Breast epithelium (tissue), 4 donors: ENCODE measurements at regions of chr6 and their contacts with region 1.

Region 1: DNA sequence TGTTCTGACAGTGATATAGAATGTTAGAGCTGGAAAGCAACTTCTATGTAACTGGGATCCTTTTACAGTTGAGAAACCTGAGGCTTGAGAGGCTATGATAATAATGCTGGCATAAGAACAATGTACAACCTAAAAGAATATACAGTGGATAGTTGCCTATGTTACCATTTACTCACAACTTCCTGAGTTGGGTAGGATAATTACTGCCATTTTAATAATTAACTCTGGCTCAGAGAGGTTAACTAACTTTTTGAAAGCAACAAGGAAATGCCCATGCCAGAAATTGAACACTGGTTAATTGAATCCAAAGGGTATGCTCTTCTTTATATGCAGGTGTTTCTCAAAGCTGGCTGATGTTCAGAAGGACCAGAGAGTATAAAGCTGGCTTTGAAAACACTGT is 530.7 kb upstream of the MAP3K7 start:
- DNase-seq: no peak
- H3K4me3 ChIP-seq: no peak overlapping the region
- H3K27ac ChIP-seq: no peak overlapping the region
- H3K4me1 ChIP-seq: no peaks in the 10 kb centered on the region
- H3K27me3 ChIP-seq: no peaks in the 10 kb centered on the region
- CTCF ChIP-seq: no peak
- POLR2A ChIP-seq: no peak

Region 2: DNA sequence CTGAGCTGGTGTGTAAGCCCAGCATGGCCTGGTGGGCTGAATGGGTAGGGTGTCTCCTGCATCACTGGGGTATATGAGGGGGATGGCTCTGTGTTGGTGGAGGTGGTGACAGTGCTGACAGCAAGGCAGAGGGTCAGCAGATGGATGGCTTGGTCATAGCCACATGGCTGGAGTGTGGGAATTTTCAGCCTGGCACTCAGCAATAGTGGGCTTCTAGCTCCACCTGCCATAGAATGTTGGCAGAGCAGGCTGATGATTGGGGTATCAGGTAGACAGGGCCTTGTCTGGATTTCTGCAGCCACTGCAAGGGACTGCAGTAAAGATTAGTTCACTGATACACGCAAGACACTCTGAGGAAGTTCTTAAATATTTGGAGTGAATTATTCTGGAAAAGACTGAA is 683.5 kb before region 1 on chr6:
- intact Hi-C with region 1: no loop called
- DNase-seq: no peak
- H3K4me3 ChIP-seq: no peak overlapping the region
- H3K27ac ChIP-seq: no peak overlapping the region
- H3K4me1 ChIP-seq: peaks cover 0 to 5% of the 10 kb centered on the region in 2 donors
- H3K27me3 ChIP-seq: no peaks in the 10 kb centered on the region
- CTCF ChIP-seq: no peak
- POLR2A ChIP-seq: no peak

Region 3: GRCh38 chr6:90973188-90973587 is 144.4 kb before region 1 on chr6:
- intact Hi-C with region 1: loop called (anchors 2 kb)
- DNase-seq: no peak
- H3K4me3 ChIP-seq: no peak overlapping the region
- H3K27ac ChIP-seq: no peak overlapping the region
- H3K4me1 ChIP-seq: no peaks in the 10 kb centered on the region
- H3K27me3 ChIP-seq: no peaks in the 10 kb centered on the region
- CTCF ChIP-seq: no peak
- POLR2A ChIP-seq: no peak

Region 4: DNA sequence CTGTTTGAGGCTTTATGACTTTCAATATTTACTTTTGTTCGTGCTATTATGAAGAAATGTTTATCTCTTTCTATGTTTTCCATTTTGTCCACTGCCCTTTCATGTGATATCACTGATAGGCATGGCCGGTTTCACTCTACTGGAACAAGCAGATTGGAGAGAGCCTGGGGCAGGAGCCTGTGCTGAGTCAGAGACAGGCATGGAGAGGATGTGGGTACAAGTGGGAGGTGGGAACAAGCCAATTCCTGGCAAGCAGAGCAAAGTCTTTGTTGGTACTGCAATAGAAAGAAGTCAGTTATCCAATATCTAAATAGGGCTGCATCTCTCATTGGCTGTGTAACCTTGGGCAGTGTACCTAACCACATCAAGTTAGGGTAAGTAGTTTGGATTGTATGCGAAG is 14.9 kb after region 1 on chr6:
- intact Hi-C with region 1: loop called (anchors 1 kb)
- DNase-seq: no peak
- H3K4me3 ChIP-seq: no peak overlapping the region
- H3K27ac ChIP-seq: no peak overlapping the region
- H3K4me1 ChIP-seq: no peaks in the 10 kb centered on the region
- H3K27me3 ChIP-seq: no peaks in the 10 kb centered on the region
- CTCF ChIP-seq: no peak
- POLR2A ChIP-seq: no peak

Region 5: DNA sequence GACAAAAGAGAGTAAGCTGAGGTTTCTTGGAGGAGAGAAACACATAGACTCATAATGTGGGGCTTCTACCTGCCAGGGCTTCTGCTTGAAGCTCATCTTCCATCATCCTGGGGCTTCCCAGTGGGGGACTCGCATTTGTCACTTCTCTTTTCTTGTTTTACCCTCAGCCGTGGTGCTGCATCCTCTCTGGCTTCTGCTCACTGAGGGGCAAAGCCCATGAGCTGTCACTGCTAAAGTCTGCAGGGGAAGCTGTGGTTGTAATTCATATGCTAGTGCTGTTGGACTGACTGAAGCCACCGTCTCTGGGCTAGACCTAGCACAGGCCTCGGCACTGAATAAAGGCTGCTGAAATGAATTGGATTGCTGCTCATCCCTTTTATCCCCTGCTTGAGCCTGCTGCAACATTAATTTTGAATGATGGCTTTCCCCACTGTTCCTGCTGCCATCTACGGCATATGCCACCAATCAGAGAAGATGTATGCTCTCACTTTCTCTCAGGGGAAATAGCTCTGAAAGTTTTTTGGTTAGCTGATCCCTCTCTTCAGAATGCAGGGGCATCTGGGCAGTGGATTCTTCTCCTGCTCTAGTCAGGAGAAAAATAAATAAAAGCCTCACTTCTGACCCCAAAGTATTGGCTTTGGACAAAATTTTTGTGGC is 37.7 kb after region 1 on chr6:
- intact Hi-C with region 1: no loop called
- DNase-seq: no peak
- H3K4me3 ChIP-seq: no peak overlapping the region
- H3K27ac ChIP-seq: no peak overlapping the region
- H3K4me1 ChIP-seq: no peaks in the 10 kb centered on the region
- H3K27me3 ChIP-seq: no peaks in the 10 kb centered on the region
- CTCF ChIP-seq: no peak
- POLR2A ChIP-seq: no peak